GM12878 (cell line): ENCODE measurements at regions of chr6 and their contacts with region 1.

Region 1: DNA sequence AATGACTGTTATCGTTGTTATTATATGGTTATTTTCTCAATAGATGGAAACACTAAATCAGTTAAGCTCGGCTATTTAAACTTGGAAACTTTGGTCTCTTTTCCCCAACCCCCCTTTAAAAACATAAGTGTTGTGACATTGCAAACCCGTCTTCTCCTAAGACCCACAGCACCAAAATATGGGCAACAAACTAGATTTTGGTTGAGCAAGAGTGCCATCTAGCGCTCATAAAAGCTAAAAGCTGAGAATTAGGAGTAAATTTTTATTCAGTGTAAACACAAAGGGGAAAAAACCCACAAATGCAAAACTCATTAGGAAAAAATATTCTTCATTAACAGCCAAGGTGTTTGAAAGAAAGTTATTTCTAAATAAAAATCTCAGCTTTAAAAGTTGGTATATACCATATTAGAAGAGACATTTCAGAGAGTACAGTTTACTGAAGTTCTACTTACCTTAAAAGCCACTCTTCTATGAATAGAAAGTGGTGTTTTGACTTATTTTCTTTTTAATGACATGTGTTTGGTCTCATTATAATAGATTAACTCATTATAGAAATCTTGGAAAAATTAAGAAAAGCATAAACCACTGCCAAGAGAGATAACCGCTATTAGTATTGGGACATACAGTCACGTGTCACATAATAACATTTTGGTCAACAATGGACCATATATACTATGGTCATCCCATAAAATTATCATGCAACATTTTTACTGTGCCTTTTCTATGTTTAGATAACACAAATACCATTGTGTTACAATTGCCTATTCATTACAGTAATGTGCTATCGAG is 21.1 kb downstream of the SESN1 start:
- DNase-seq: no peak
- ATAC-seq: peak; percentile 61; the same call in 2 of the 3 replicates
- H3K4me3 ChIP-seq: no peak overlapping the region
- H3K27ac ChIP-seq: no peak overlapping the region
- H3K4me1 ChIP-seq: no peaks in the 10 kb centered on the region
- H3K27me3 ChIP-seq: 0 out of 4 replicates have a peak, but pooled peaks cover 0 to 1% of the 10 kb centered on the region in 2 experiments
- CTCF ChIP-seq: peak; percentile 48 to 75 (median 60)
- EP300 ChIP-seq: no peak
- POLR2A ChIP-seq: no peak
- RAD21 ChIP-seq: peak; percentile 86

Region 2: DNA sequence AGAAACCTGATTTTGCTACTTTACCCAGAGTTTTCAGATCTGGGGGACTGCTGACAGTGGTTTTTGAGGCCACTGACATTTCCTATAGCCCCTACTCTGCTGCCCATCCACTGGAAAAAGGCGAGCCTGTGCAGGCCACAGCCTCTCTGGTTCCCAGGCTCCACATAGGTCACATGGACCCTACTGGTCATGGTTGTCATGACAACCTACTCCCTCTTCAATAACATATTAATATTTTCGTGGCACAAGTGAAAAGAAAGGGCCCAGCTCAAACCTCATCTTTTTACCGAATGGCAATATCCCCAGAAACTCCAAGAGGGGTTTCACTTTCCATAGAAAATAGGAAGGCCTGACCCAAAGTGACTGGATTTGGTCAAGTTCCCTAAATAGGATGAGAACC is 523.8 kb before region 1 on chr6:
- CTCF ChIA-PET with region 1: interaction called, 107 read pairs
- POLR2A ChIA-PET with region 1: no interaction called
- RAD21 ChIA-PET with region 1: interaction called, 3 read pairs
- SMC1A ChIA-PET with region 1: interaction called, 8 read pairs
- in situ Hi-C with region 1: loop called (anchors 5 kb)
- intact Hi-C with region 1: no loop called
- DNase-seq: no peak
- ATAC-seq: no peak
- H3K4me3 ChIP-seq: no peak overlapping the region
- H3K27ac ChIP-seq: no peak overlapping the region
- H3K4me1 ChIP-seq: no peaks in the 10 kb centered on the region
- H3K27me3 ChIP-seq: peaks cover 2 to 6% of the 10 kb centered on the region in 2 experiments; a peak in 2 of 4 replicates
- CTCF ChIP-seq: no peak
- EP300 ChIP-seq: no peak
- POLR2A ChIP-seq: no peak
- RAD21 ChIP-seq: no peak

Region 3: DNA sequence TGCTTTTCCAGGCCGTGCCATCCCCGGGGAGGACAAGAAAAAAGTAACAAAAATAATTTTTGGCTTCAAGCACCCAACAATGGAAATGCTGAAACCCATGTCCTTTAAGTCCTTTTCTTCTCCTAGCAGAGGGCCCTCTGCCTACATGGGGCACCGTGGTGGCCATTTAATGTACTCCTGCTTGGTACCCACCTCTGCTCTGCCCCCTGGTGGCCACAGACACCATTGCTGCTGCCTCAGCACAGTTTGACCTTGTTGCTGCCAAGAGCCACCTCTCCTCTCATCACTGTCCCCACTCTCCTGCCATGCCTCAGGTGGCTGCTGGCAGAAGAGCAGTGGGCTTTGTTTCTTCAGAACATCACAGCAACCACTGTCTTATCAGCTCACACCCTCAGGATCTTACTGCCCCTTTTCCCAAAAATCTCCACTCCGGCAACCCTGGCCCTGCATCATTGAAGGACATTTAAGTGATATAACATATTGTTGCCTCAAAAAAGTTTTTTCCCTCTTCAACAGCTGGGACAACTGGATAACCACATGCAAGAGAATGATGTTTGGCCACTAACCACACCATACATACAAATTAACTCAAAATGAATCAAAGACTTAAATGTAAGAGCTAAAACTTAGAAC is 238.2 kb before region 1 on chr6:
- CTCF ChIA-PET with region 1: interaction called, 15 read pairs
- POLR2A ChIA-PET with region 1: no interaction called
- RAD21 ChIA-PET with region 1: interaction called, 3 read pairs
- SMC1A ChIA-PET with region 1: interaction called, 11 read pairs
- in situ Hi-C with region 1: no loop called
- intact Hi-C with region 1: loop called (anchors 1 kb)
- DNase-seq: peak; percentile 8
- ATAC-seq: peak; percentile 100
- H3K4me3 ChIP-seq: no peak overlapping the region
- H3K27ac ChIP-seq: no peak overlapping the region
- H3K4me1 ChIP-seq: no peaks in the 10 kb centered on the region
- H3K27me3 ChIP-seq: peaks cover 0 to 3% of the 10 kb centered on the region in 2 experiments; a peak in 3 of 4 replicates
- CTCF ChIP-seq: peak; percentile 71 to 91 (median 84)
- EP300 ChIP-seq: no peak; a peak in 1 of 4 replicates
- POLR2A ChIP-seq: no peak
- RAD21 ChIP-seq: peak; percentile 71

Region 4: DNA sequence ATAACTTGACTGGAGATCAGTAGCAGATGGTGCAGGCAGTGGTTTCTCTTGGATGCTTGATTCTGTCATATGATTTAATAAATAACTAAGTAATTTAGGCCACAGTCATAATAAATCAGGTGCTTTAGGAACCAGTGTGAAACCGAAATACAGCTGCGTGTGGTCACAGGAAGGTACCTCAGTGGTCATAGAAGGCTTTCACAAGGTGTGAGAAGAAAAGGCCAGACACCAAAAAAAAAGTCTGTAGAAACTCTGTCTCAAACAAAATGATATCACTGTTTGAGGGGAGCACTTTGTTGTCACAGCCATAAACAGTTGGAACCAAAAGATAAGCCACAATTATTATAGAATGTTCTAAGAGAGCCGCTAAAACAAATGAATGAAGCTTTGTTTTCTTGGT is 168.8 kb before region 1 on chr6:
- CTCF ChIA-PET with region 1: interaction called, 14 read pairs
- POLR2A ChIA-PET with region 1: interaction called, 3 read pairs
- RAD21 ChIA-PET with region 1: no interaction called
- SMC1A ChIA-PET with region 1: interaction called, 3 read pairs
- in situ Hi-C with region 1: no loop called
- intact Hi-C with region 1: no loop called
- DNase-seq: peak; percentile 55
- ATAC-seq: peak; percentile 97
- H3K4me3 ChIP-seq: no peak overlapping the region
- H3K27ac ChIP-seq: no peak overlapping the region
- H3K4me1 ChIP-seq: peaks cover 3% of the 10 kb centered on the region; the same call in 1 of the 2 replicates
- H3K27me3 ChIP-seq: peaks cover 5 to 6% of the 10 kb centered on the region in 2 experiments; a peak in 1 of 4 replicates
- CTCF ChIP-seq: no peak
- EP300 ChIP-seq: peak; percentile 69 to 89; a peak in 3 of 4 replicates
- POLR2A ChIP-seq: no peak
- RAD21 ChIP-seq: no peak

Region 5: DNA sequence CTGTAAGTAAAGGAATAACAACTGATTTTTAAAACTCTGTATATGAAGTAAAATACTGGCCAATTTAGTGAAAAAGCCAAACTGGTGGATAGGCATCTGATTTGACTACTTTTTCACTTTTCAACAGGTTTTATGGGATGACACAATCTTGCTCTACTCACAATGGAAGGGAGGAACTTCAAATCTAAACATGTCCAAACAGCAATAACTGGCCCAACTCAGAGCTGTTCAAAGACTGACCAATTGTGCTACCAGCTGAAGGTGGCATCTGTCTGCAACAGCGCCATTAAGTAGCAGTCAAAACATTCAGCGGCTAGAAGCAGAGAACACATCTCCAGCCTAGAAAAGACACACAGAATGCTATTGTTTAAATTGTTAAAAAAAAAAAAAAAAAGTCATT is 23.5 kb before region 1 on chr6:
- CTCF ChIA-PET with region 1: interaction called, 13 read pairs
- POLR2A ChIA-PET with region 1: no interaction called
- RAD21 ChIA-PET with region 1: interaction called, 10 read pairs
- SMC1A ChIA-PET with region 1: interaction called, 3 read pairs
- in situ Hi-C with region 1: no loop called
- intact Hi-C with region 1: no loop called
- DNase-seq: no peak
- ATAC-seq: no peak
- H3K4me3 ChIP-seq: no peak overlapping the region
- H3K27ac ChIP-seq: no peak overlapping the region
- H3K4me1 ChIP-seq: peaks cover 14% of the 10 kb centered on the region
- H3K27me3 ChIP-seq: no peaks in the 10 kb centered on the region; a peak in 1 of 4 replicates
- CTCF ChIP-seq: no peak
- EP300 ChIP-seq: no peak
- POLR2A ChIP-seq: no peak
- RAD21 ChIP-seq: no peak

Region 6: GRCh38 chr6:109083657-109084056 is 10.1 kb after region 1 on chr6:
- CTCF ChIA-PET with region 1: interaction called, 38 read pairs
- POLR2A ChIA-PET with region 1: no interaction called
- RAD21 ChIA-PET with region 1: no interaction called
- SMC1A ChIA-PET with region 1: interaction called, 5 read pairs
- in situ Hi-C with region 1: no loop called
- intact Hi-C with region 1: no loop called
- DNase-seq: no peak
- ATAC-seq: no peak; the same call in 2 of the 3 replicates
- H3K4me3 ChIP-seq: no peak overlapping the region
- H3K27ac ChIP-seq: no peak overlapping the region
- H3K4me1 ChIP-seq: no peaks in the 10 kb centered on the region
- H3K27me3 ChIP-seq: no peaks in the 10 kb centered on the region
- CTCF ChIP-seq: no peak
- EP300 ChIP-seq: no peak
- POLR2A ChIP-seq: no peak
- RAD21 ChIP-seq: no peak

Region 7: DNA sequence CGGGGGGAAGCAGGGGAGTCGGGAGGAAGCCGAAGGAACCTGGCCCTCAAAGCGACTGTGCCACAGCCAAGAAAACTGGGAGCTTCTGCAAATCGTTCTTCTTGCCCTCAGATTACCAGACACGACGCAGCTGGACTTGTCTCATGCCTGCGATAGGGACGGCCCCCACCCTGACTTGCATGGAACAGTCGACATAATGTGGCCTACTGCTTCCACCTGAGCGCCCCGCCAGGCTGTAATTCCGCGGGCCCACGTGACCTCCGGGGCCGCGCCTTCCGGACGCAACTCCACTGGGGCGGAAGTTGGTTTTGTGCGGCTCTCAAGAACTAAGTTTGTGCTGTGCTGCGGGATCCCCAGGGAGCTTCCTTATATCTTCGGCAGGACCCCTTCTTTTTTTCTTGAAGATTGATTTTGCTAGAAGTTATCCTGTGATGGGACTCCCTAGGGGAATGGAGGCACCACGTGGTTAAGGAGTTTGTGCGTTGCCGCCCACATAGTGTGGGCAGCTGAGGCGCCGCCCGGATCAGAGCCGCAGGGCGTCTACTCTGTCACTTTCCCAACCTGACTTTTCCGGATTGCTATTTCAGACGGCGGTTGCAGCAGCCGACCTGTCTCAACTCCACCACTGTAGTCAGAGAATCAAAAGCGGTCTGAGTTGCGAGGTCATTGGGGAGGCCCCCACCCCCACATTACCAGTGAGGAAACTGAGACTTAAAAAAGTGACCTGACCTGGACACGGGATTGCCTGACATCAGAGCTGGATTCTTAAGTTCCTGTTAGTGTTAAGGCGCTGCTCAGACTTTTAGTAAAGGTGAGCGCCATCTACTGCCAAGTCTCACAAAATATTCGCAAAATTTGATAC is 309.3 kb after region 1 on chr6:
- CTCF ChIA-PET with region 1: interaction called, 18 read pairs
- POLR2A ChIA-PET with region 1: no interaction called
- RAD21 ChIA-PET with region 1: interaction called, 3 read pairs
- SMC1A ChIA-PET with region 1: interaction called, 4 read pairs
- in situ Hi-C with region 1: no loop called
- intact Hi-C with region 1: no loop called
- DNase-seq: peak; percentile 82
- ATAC-seq: peak; percentile 79
- H3K4me3 ChIP-seq: peak overlapping the region; percentile 86
- H3K27ac ChIP-seq: peak overlapping the region; percentile 100
- H3K4me1 ChIP-seq: peaks cover 8% of the 10 kb centered on the region
- H3K27me3 ChIP-seq: no peaks in the 10 kb centered on the region
- CTCF ChIP-seq: peak; percentile 51 to 71 (median 60); a peak in 5 of 6 replicates
- EP300 ChIP-seq: peak in 1 of 2 experiments; percentile 69; a peak in 1 of 4 replicates
- POLR2A ChIP-seq: peak; percentile 75
- RAD21 ChIP-seq: peak; percentile 74

Region 8: GRCh38 chr6:109458774-109459531 is 385.4 kb after region 1 on chr6:
- CTCF ChIA-PET with region 1: no interaction called
- POLR2A ChIA-PET with region 1: no interaction called
- RAD21 ChIA-PET with region 1: no interaction called
- SMC1A ChIA-PET with region 1: no interaction called
- in situ Hi-C with region 1: no loop called
- intact Hi-C with region 1: no loop called
- DNase-seq: peak; percentile 56
- ATAC-seq: peak; percentile 19
- H3K4me3 ChIP-seq: no peak overlapping the region
- H3K27ac ChIP-seq: peak overlapping the region; percentile 75
- H3K4me1 ChIP-seq: peaks cover 45% of the 10 kb centered on the region
- H3K27me3 ChIP-seq: no peaks in the 10 kb centered on the region
- CTCF ChIP-seq: no peak
- EP300 ChIP-seq: peak; percentile 27 to 28; a peak in 3 of 4 replicates
- POLR2A ChIP-seq: no peak
- RAD21 ChIP-seq: no peak